ENCODE measurements at regions of chr12 and their contacts with region 1.

Region 1: GRCh38 chr12:56315622-56316473 is at the start of gene CNPY2:
- DNase-seq: peak; percentile 99
- ATAC-seq: peak; percentile 92
- H3K4me3 ChIP-seq: peak within 1 kb of the TSS; percentile 95 to 99
- H3K27ac ChIP-seq: peak within 1 kb of the TSS; percentile 79
- H3K4me1 ChIP-seq: peaks cover 6 to 16% of the 10 kb centered on the region in 2 experiments; a peak in 3 of 4 replicates
- H3K27me3 ChIP-seq: no peaks in the 10 kb centered on the region
- CTCF ChIP-seq: 0 out of 6 replicates have a peak, but pooled peaks of 1 of the 3 experiments have one; percentile 8
- POLR2A ChIP-seq: peak; percentile 45
- RAD21 ChIP-seq: peak; percentile 67
- total RNA-seq, gene CNPY2: 109 TPM

Region 2: GRCh38 chr12:56117778-56118687 is 197.8 kb before region 1 on chr12 and contains the start of gene ZC3H10:
- CTCF ChIA-PET with region 1: no interaction called
- POLR2A ChIA-PET with region 1: no interaction called
- RAD21 ChIA-PET with region 1: no interaction called
- intact Hi-C with region 1: no loop called
- DNase-seq: peak; percentile 99
- ATAC-seq: peak; percentile 73
- H3K4me3 ChIP-seq: peak within 1 kb of the TSS; percentile 80 to 82
- H3K27ac ChIP-seq: peak within 1 kb of the TSS; percentile 93
- H3K4me1 ChIP-seq: peaks cover 23 to 34% of the 10 kb centered on the region in 2 experiments
- H3K27me3 ChIP-seq: no peaks in the 10 kb centered on the region
- CTCF ChIP-seq: peak in 2 of 3 experiments; percentile 30 to 37; a peak in 3 of 6 replicates
- POLR2A ChIP-seq: peak; percentile 99
- RAD21 ChIP-seq: no peak
- total RNA-seq, gene ZC3H10: 8.7 TPM

Region 3: GRCh38 chr12:56206457-56207166 is 109.2 kb before region 1 on chr12:
- CTCF ChIA-PET with region 1: no interaction called
- POLR2A ChIA-PET with region 1: no interaction called
- RAD21 ChIA-PET with region 1: no interaction called
- intact Hi-C with region 1: no loop called
- DNase-seq: no peak
- ATAC-seq: peak; percentile 92
- H3K4me3 ChIP-seq: no peak overlapping the region
- H3K27ac ChIP-seq: no peak overlapping the region
- H3K4me1 ChIP-seq: no peaks in the 10 kb centered on the region
- H3K27me3 ChIP-seq: no peaks in the 10 kb centered on the region
- CTCF ChIP-seq: peak; percentile 69 to 82 (median 74); a peak in 5 of 6 replicates
- POLR2A ChIP-seq: no peak
- RAD21 ChIP-seq: peak; percentile 74

Region 4: DNA sequence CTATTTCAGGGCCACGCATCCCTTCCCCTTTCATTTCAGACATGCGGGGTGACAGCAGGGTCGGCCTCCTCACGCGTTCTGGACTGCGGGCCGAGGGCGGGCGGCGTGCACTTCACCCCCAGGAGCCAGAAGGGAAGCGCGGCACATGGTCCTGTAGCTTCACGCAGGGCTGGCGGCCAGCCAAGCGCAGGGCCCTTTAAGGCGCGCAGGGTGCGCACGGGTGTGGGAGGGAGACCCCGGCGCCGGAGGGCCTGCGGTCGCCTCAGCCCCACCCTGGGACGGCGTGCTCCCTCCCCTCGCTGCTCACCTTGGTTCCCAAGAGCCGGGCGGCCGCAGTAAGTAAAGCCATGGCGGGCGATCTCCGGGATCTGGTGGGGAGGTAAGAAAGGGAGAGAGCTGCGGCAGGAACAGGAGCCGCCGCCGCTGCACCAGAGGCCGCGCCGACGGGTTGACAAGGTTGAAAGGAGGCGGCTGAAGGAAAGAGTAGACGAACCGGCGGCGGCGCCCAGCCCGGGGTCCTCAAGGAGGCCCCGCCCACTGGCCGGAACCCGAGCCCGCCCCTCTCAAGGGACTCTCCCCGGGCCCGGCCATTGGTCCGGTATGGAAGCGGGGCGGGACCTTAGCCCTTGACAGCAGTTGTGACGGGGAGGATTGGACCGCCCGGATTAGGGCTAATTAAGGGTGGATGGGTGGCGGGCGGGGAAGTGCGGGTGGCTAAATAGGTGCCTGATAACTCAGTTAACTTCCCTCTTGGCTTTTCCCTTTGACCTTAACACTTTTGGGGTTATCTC is 15.8 kb before region 1 on chr12 and contains the start of gene CS:
- CTCF ChIA-PET with region 1: no interaction called
- POLR2A ChIA-PET with region 1: no interaction called
- RAD21 ChIA-PET with region 1: no interaction called
- intact Hi-C with region 1: loop called (anchors 1 kb)
- DNase-seq: peak; percentile 96
- ATAC-seq: peak; percentile 96
- H3K4me3 ChIP-seq: peak within 1 kb of the TSS; percentile 69 to 99
- H3K27ac ChIP-seq: peak within 1 kb of the TSS; percentile 74
- H3K4me1 ChIP-seq: peaks cover 22 to 44% of the 10 kb centered on the region in 2 experiments; a peak in 3 of 4 replicates
- H3K27me3 ChIP-seq: no peaks in the 10 kb centered on the region
- CTCF ChIP-seq: no peak
- POLR2A ChIP-seq: peak; percentile 42
- RAD21 ChIP-seq: no peak
- total RNA-seq, gene CS: 270 TPM

Region 5: DNA sequence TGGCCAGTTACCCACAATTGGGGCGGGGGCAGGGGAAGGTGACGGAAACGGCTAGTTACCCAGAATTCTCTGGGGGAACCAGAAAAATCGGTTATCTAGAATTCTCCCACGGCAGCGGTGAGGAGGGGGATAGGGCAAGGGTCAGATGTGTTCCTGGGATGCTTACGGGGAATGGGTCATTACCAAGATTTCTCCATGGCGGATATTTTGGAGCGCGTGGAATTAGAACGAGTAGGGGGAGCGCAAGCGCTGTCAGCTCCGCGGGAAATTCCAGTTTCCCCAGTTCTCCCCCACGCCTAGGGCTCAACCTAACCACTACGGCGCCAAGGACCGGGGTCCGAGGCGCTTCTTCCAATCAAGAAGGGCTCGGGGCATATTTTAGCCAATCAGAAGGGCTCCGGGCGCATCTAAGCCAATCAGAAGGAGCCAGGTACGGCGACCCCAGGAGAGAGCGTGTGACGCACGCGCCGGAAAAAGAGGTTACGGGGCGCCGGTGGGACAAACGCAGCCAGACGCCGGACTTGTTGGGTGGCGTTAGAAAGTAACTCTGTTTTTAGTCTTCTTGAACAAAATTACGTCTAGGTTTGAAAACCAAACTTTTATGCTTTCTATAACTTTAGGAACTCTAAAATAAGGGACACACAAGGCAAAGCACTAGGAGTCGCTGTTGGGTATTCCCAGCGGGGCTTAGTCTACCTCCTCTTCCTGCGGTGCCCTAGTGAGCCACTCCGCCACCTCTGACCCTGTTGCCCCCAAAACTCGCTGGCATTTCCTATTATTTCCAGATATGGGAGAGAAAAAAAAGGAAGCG is 18.0 kb after region 1 on chr12 and contains the start of gene PAN2:
- CTCF ChIA-PET with region 1: interaction called, 10 read pairs
- POLR2A ChIA-PET with region 1: interaction called, 6 read pairs
- RAD21 ChIA-PET with region 1: no interaction called
- intact Hi-C with region 1: no loop called
- DNase-seq: peak; percentile 98
- ATAC-seq: peak; percentile 97
- H3K4me3 ChIP-seq: peak within 1 kb of the TSS; percentile 68 to 87
- H3K27ac ChIP-seq: peak within 1 kb of the TSS; percentile 66
- H3K4me1 ChIP-seq: peaks cover 11 to 24% of the 10 kb centered on the region in 2 experiments
- H3K27me3 ChIP-seq: no peaks in the 10 kb centered on the region
- CTCF ChIP-seq: peak; percentile 13 to 68 (median 54); a peak in 4 of 6 replicates
- POLR2A ChIP-seq: peak; percentile 82
- RAD21 ChIP-seq: peak; percentile 34; the same call in 1 of the 2 replicates
- total RNA-seq, gene PAN2: 75.0 TPM

Region 6: DNA sequence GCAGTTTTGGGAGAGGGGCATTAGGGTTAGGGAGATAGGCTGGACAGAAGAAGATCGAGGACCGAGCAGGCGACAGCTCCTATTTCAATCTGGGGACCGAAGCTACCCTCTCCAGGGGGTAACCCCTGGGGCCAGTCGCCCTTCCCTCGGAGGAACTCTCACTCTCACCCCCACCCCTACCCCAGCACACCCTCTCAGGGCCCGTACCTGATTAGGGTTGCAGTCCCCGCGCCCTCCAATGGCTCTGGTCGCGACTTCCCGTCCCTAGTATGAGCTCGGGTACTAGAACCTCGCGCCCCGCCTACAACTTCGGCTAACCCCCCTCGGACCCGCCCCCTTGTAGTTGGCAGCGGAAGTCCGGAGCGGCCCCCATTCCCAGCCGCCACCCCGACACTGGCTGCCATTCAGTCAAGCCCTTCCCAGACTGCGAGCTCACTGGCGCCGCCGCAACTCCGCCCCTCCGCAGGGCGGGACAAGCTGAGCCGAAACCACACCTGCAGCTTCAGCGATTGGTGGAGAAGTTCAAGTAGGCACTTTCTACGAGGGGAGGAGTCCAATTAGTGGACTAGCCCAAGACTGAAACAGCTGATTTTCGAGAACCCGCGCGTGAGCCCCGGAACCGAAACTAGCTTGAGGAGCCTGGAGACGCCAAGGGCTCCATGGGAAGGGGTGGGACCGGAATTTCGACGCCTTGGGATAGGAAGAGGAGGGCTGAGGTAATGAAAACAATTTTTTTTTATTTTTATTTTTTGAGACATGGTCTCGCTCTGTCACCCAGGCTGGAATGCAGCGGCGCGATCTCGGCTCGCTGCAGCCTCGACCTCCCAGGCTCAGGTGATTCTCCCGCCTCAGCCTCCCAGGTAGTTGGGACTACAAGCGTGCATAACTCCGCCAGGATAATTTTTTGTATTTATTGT is 44.3 kb after region 1 on chr12 and contains the start of gene STAT2:
- CTCF ChIA-PET with region 1: interaction called, 5 read pairs
- POLR2A ChIA-PET with region 1: interaction called, 15 read pairs
- RAD21 ChIA-PET with region 1: interaction called in 1 of 2 experiments, 3 read pairs
- intact Hi-C with region 1: no loop called
- DNase-seq: peak; percentile 100
- ATAC-seq: peak; percentile 96
- H3K4me3 ChIP-seq: peak within 1 kb of the TSS; percentile 74 to 93
- H3K27ac ChIP-seq: peak within 1 kb of the TSS; percentile 74
- H3K4me1 ChIP-seq: peaks cover 10 to 18% of the 10 kb centered on the region in 2 experiments; a peak in 3 of 4 replicates
- H3K27me3 ChIP-seq: no peaks in the 10 kb centered on the region
- CTCF ChIP-seq: no peak
- POLR2A ChIP-seq: peak; percentile 50
- RAD21 ChIP-seq: no peak
- total RNA-seq, gene STAT2: 53.1 TPM

Region 7: GRCh38 chr12:56461235-56462159 is 145.6 kb after region 1 on chr12:
- CTCF ChIA-PET with region 1: interaction called, 17 read pairs
- POLR2A ChIA-PET with region 1: interaction called, 4 read pairs
- RAD21 ChIA-PET with region 1: interaction called in 1 of 2 experiments, 7 read pairs
- intact Hi-C with region 1: loop called (anchors 5 kb)
- DNase-seq: no peak
- ATAC-seq: peak; percentile 30; the same call in 1 of the 2 replicates
- H3K4me3 ChIP-seq: no peak overlapping the region; a peak in 1 of 4 replicates
- H3K27ac ChIP-seq: no peak overlapping the region
- H3K4me1 ChIP-seq: peaks cover 5 to 23% of the 10 kb centered on the region in 2 experiments
- H3K27me3 ChIP-seq: no peaks in the 10 kb centered on the region
- CTCF ChIP-seq: no peak
- POLR2A ChIP-seq: no peak
- RAD21 ChIP-seq: no peak

Region 8: DNA sequence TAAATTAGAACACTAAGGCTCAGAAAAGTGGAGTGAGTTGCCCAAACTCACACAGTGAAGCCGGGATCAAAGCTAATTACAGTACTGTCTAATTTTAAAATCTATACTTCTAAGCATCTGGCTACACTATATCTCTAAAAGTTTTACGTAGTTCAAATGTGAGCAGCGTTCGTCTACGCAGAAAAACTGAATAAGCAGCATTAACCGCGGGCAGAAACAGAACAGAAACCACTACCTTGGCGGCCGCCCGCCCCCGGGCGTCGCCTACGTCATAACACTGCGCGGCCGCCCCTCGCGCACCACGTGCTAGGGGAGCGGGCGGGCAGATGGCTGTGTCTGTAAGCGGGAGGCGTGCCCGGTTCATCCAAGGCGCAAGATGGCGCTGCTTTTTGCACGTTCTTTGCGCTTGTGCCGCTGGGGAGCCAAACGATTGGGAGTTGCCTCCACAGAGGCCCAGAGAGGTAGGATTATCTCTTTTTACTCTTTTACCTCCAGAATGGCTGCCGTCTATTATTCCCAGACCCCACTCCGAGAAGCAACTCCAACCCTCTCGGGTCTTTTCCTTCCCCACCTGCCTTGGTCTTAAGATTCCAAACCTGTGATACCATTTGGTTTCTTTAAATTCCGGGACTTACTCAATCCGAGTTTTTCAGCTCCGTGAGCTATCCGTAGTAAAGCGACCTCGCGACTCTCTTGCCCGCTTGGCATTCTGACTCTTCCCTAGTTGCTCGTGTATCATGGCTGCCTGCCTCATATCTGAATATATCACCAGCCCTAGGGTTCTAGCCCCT is 152.6 kb after region 1 on chr12 and contains the start of gene SPRYD4:
- CTCF ChIA-PET with region 1: interaction called, 17 read pairs
- POLR2A ChIA-PET with region 1: interaction called, 3 read pairs
- RAD21 ChIA-PET with region 1: interaction called in 1 of 2 experiments, 7 read pairs
- intact Hi-C with region 1: loop called (anchors 5 kb)
- DNase-seq: peak; percentile 82
- ATAC-seq: peak; percentile 84
- H3K4me3 ChIP-seq: peak within 1 kb of the TSS; percentile 74 to 99
- H3K27ac ChIP-seq: peak within 1 kb of the TSS; percentile 68
- H3K4me1 ChIP-seq: peaks cover 5 to 26% of the 10 kb centered on the region in 2 experiments
- H3K27me3 ChIP-seq: no peaks in the 10 kb centered on the region
- CTCF ChIP-seq: peak; percentile 15 to 43 (median 24); a peak in 2 of 6 replicates
- POLR2A ChIP-seq: peak; percentile 95
- RAD21 ChIP-seq: no peak
- total RNA-seq, gene SPRYD4: 2.5 TPM